ENCODE measurements at regions of chr4 and their contacts with region 1.

Region 1: DNA sequence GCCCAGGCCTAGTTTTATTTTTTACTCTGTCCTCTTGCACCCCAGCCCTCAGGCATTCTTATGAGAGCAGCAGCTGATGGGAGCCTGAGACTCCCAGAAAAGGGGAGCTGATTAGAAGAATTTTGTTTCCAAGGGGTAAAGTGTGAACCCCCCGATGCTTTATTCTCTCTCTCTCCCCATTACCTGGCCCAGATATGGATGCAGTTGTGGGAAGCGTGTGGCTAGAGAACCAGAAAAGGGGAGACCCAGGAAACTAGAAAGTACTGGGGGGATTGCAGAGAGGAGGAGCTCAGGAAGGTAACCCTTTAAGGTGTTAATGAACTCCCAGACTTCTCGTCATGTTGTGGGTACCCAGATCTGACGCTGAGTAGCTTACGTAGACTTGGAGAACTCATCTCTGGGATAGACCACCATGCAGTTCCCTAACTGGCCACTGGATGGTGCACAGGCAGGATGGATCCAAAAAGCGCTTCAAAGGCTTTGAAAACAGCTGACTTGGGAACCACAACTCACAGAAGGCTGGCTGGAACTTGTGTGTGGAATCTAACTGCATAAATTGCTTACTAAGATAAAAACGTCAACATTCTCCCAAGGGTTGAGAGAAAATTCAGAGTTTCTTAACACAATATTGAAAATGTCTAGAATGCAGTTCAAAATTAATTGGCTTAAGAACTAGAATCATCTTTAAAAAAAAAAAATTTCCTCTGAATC is 64.7 kb downstream of the TBC1D14 start:
- DNase-seq: peak; percentile 84
- ATAC-seq: peak; percentile 99
- H3K4me3 ChIP-seq: no peak overlapping the region
- H3K27ac ChIP-seq: no peak overlapping the region
- H3K4me1 ChIP-seq: 0 out of 2 replicates have a peak, but pooled peaks cover 1% of the 10 kb centered on the region
- H3K27me3 ChIP-seq: no peaks in the 10 kb centered on the region
- CTCF ChIP-seq: peak; percentile 88
- POLR2A ChIP-seq: no peak
- RAD21 ChIP-seq: peak; percentile 80

Region 2: DNA sequence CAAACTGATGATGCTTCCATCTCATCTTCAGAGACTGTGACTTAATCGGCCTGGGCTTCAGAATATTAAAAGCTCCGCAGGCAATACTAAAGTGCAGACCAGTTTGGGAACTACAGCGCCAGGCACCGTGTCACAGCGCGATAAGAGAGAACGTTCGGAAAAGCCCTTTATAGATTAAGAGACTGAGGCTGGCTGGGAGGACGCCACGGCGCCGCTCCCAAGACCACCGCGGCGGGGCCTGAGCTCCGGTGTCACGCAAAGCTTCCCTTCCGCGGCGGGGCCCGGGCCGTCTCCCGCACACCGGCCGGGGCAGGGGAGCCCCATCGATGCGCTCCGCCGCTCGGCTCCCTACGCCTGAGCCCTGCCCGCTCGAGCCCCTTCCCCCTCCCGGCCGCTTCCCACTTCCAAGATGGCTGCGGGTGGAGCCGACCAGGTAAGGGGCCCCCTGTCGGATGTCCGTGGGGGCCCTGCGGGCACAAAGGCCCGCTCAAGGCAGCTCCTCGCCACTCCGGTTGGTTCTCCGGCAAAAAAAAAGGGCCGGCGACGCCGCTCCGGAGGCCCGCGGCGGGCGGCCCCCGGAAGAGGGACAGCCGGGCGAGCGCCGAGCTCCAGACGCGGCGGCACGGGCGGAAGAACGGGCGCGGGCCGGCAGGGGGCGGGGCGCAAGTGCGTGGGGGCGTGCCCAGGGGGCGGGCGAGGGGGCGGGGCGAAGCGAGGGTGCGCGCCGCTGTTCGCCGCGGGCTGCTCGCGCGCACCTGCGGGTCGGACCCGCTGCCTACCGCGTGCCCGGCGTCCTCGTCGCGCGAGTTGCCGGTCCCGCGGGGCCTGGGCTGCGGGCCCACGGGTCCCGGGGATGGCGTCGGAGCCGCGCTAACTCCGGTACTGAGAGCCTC is 65.0 kb before region 1 on chr4 and contains the start of gene TBC1D14:
- CTCF ChIA-PET with region 1: no interaction called
- POLR2A ChIA-PET with region 1: interaction called, 4 read pairs
- dilution Hi-C with region 1: no loop called
- in situ Hi-C with region 1: no loop called
- intact Hi-C with region 1: loop called (anchors 5 kb)
- DNase-seq: peak; percentile 81
- ATAC-seq: peak; percentile 96
- H3K4me3 ChIP-seq: peak within 1 kb of the TSS; percentile 81
- H3K27ac ChIP-seq: peak within 1 kb of the TSS; percentile 81
- H3K4me1 ChIP-seq: peaks cover 9% of the 10 kb centered on the region
- H3K27me3 ChIP-seq: no peaks in the 10 kb centered on the region
- CTCF ChIP-seq: peak; percentile 14; the same call in 1 of the 2 replicates
- POLR2A ChIP-seq: peak; percentile 90
- RAD21 ChIP-seq: no peak
- total RNA-seq, gene TBC1D14: 40.7 and 48.9 TPM in 2 replicates

Measured in IMR-90 (cell line).